Activated T-helper 1 cell treated with anti-CD3 and anti-CD28 coated beads, Interleukin-12 subunit alpha, Interleukin-12 subunit beta, Interleukin-2, Interleukin-4 antibody, amounts not matched to agents 30 ng/mL and 10 ng/mL and 1 ng/mL, durations not matched to agents 14 hours and 24 hours and 36 hours (primary cell): ENCODE measurements at regions of chr6 and their contacts with region 1.

Region 1: DNA sequence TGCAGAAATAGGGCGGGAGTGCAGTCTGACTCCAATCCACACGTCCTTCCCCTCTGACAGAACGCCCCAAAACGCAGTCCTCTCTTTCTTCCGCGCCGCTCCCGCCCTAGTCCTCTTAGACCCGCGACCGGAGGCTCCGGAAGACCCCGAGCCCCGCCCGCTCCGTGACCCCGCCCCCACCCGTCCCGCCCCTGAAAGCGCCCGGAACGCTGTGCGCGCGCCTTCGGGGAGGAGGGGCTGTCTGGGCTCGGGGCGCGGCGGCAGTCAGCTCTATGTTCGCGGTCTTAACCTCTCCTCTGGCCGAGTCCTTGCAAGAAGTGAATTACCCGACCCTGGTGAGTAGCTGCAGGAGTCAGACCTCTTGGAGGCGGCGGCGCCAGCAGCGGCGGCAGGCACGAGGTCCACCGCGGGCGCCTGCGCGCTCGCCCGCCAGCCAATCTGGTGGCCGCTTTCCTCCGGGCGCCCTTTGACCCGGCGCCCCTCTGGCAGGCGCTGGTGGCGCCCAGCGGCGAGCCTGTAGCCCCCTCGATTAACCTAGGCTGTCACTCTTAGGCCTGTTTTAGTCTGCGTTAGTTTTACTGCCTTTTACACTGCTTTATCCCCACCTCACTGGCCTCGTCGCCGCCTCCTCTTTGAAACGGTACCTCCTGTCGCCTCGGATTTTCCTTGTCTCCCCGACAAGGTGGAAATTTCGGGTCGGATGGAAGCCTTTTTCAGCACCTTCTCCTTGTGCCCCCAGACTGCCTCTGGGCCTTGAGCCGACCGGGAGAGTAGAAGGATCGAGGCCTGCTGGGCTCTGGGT is at the start of gene MANEA:
- DNase-seq: peak; percentile 77
- H3K4me3 Mint-ChIP-seq: peak within 1 kb of the TSS; percentile 91
- H3K27ac Mint-ChIP-seq: peak within 1 kb of the TSS; percentile 98
- H3K4me1 Mint-ChIP-seq: peaks cover 46% of the 10 kb centered on the region
- H3K27me3 Mint-ChIP-seq: peaks cover 1% of the 10 kb centered on the region
- total RNA-seq, gene MANEA: 23.1 and 26.8 TPM in 2 replicates

Region 2: DNA sequence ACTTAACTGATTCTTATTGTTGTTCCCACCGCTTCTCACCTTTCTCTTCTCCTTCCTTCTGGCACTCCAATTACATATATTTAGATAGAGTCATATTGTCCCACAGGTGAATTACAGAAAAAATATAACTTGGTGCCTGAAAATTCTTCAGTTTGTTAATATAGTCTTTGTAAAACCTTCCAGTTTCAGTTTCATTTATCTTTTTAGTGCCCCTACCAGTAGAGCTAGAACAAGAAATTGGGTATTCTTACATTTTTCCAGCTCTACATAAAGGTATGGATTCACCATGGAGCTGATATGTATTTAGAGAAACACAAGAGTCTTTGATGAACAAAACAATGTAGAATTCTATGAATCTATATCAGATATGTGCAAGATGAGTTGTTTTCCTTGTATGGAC is 10.5 kb after region 1 on chr6:
- intact Hi-C with region 1: loop called (anchors 1 kb)
- DNase-seq: no peak
- H3K4me3 Mint-ChIP-seq: peak overlapping the region; percentile 58
- H3K27ac Mint-ChIP-seq: peak overlapping the region; percentile 24
- H3K4me1 Mint-ChIP-seq: peaks cover 19% of the 10 kb centered on the region
- H3K27me3 Mint-ChIP-seq: no peaks in the 10 kb centered on the region

Region 3: GRCh38 chr6:95959261-95959660 is 381.8 kb after region 1 on chr6:
- intact Hi-C with region 1: no loop called
- DNase-seq: no peak
- H3K4me3 Mint-ChIP-seq: no peak overlapping the region
- H3K27ac Mint-ChIP-seq: no peak overlapping the region
- H3K4me1 Mint-ChIP-seq: no peaks in the 10 kb centered on the region
- H3K27me3 Mint-ChIP-seq: no peaks in the 10 kb centered on the region